Activated naive CD4-positive, alpha-beta T cell treated with anti-CD3 and anti-CD28 coated beads for 36 hours (primary cell): ENCODE measurements at regions of chr19 and their contacts with region 1.

Region 1: DNA sequence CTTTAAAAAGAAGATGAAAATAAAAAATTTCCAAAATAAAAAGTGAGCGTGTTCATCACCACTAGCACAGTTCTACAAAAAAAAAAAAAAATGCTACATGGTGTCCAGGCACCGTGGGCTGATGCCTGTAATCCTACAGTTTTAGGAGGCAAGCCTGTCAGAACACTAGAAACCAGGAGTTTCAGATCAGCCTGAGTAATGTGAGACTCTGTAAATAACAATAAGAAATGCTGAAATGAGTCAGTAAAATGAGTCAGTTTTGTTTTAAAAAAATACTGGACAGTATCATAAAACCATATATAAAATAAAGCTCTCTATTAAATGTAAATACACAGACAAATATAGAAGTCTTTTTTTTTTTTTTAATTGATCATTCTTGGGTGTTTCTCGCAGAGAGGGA is 30.0 kb downstream of the ZNF91 start:
- DNase-seq: no peak
- H3K4me3 Mint-ChIP-seq: no peak overlapping the region
- H3K27ac Mint-ChIP-seq: no peak overlapping the region
- H3K4me1 Mint-ChIP-seq: no peaks in the 10 kb centered on the region
- H3K27me3 Mint-ChIP-seq: no peaks in the 10 kb centered on the region

Region 2: DNA sequence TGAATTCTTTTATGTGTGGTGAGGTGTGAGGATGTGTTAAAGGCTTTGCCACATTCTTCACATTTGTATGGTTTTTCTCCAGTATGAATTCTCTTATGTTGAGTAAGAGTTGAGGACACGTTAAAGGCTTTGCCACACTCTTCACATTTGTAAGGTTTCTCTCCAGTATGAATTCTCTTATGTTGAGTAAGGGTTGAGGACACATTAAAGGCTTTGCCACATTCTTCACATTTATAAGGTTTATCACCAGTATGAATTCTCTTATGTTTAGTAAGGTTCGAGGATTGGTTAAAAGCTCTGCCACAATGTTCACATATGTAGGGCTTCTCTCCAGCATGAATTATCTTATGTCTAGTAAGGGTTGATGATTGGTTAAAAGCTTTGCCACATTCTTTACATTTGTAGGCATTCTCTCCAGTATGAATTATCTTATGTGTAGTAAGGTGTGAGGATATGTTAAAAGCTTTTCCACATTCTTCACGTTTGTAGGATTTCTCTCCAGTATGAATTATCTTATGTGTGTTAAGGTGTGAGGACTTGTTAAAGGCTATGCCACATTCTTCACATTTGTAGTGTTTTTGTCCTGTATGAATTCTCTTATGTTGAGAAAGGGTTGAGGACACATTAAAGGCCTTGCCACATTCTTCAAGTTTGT is 142.1 kb before region 1 on chr19:
- CTCF ChIA-PET with region 1: no interaction called
- intact Hi-C with region 1: loop called (anchors 10 kb)
- DNase-seq: no peak
- H3K4me3 Mint-ChIP-seq: no peak overlapping the region
- H3K27ac Mint-ChIP-seq: peak overlapping the region; percentile 38
- H3K4me1 Mint-ChIP-seq: no peaks in the 10 kb centered on the region
- H3K27me3 Mint-ChIP-seq: no peaks in the 10 kb centered on the region

Region 3: DNA sequence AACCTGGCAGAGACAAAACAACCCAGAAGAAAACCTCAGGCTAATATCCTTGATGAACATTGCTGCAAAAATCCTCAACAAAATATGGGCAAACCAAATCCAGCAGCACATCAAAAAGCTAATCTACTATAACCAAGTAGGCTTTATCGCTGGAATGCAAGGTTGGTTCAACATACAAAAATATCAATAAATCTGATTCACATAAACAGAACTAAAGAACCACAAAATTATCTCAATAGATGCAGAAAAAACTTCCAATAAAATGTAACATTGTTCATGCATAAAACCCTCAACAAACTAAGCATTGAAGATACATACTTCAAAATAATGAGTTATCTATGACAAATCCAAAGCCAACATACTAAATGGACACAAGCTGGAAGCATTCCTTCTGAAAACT is 123.8 kb before region 1 on chr19:
- CTCF ChIA-PET with region 1: no interaction called
- intact Hi-C with region 1: no loop called
- DNase-seq: no peak
- H3K4me3 Mint-ChIP-seq: no peak overlapping the region
- H3K27ac Mint-ChIP-seq: no peak overlapping the region
- H3K4me1 Mint-ChIP-seq: peaks cover 5% of the 10 kb centered on the region
- H3K27me3 Mint-ChIP-seq: no peaks in the 10 kb centered on the region

Region 4: DNA sequence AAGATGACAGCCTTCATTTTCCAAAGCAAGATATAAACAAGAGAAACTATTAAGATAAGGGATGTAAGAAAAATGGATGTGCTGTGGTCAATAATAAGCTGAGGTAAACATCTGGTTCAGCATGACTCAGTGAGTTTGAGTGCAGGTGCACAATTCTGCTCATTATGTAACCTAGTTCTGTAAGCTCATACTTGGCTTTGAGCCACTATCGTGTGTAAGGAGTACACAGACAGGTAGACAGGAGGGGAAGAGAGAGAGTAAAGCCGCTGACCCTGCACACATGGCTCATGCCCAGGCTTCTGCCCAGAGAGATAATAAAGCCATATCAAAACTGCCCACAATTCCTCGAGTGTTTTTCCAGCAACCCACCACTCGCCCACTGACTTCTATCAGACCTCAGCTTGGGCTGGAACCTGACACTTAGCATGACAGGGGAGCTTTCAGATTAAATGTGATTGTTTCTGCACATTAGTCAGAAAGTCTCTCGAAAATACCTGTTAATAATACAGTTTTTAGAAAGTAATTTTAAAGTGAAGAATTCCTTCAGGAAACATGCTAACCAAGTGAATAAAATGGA is 21.7 kb before region 1 on chr19:
- CTCF ChIA-PET with region 1: no interaction called
- intact Hi-C with region 1: no loop called
- DNase-seq: no peak
- H3K4me3 Mint-ChIP-seq: no peak overlapping the region
- H3K27ac Mint-ChIP-seq: no peak overlapping the region
- H3K4me1 Mint-ChIP-seq: no peaks in the 10 kb centered on the region
- H3K27me3 Mint-ChIP-seq: no peaks in the 10 kb centered on the region

Region 5: DNA sequence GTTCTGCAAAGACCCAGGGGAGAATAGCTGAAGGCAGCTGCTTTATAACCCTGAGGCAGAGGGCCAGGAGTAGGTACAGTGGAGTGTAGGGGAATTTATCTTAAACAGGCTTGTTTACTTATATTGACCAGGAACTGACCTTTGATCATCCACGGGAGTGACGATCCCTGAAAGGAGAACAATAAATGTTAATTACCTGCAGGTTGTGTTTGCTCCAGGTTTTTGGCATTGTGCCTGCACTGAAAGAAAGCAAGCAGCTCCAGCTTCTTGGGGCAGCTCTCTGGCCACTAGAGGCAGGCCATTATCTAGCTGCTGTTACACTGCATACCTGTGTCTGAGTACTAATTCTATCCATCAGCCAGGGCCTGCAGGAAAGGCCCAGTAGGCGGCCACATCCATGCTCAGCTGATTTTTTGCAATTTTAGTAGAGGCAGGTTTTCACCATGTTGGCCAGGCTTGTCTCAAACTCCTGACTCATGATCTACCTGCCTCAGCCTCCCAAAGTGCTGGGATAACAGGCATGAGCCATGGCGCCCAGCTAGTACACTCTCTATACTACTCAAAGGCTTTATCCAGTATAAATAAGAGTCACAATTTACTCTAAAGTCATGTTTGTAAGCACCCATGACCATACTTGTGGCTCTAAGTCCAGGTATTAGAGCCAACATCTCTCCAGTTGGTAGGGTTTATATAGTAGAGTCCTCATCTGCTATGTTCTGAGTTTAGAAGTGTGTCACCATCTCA is 38.5 kb after region 1 on chr19:
- CTCF ChIA-PET with region 1: no interaction called
- intact Hi-C with region 1: no loop called
- DNase-seq: no peak
- H3K4me3 Mint-ChIP-seq: no peak overlapping the region
- H3K27ac Mint-ChIP-seq: no peak overlapping the region
- H3K4me1 Mint-ChIP-seq: no peaks in the 10 kb centered on the region
- H3K27me3 Mint-ChIP-seq: no peaks in the 10 kb centered on the region

Region 6: DNA sequence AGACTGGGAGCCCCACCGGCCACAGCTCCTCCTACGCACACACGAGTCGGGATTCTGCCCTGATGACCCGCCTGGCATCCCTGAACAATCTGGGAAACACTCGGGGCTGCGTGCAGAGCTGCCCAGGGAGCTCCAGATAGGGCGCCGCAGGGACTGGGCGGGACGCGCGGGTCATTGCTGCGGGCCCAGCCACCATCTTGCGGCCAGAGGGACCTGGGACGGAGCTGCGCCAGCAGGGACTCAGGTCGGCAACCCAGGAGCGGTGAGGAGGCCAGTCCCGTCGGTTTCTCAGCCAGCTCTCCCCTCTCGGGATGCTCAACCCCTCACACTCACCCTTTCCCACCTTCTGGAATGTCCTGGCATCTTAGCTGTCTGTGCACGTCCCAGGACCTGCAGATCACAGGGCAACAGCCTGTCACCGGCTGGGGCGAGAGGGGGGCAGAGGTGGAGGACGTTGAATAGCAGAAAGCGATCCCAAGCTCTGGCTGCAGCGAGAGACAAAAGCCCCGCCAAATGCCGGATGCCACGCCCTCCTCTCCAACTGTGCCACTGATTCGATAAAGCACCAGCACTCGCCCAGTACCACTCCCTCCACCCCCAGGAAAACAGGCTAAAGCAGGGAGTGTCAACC is 50.5 kb after region 1 on chr19:
- CTCF ChIA-PET with region 1: no interaction called
- intact Hi-C with region 1: no loop called
- DNase-seq: peak; percentile 27
- H3K4me3 Mint-ChIP-seq: peak overlapping the region; percentile 68
- H3K27ac Mint-ChIP-seq: no peak overlapping the region
- H3K4me1 Mint-ChIP-seq: peaks cover 10% of the 10 kb centered on the region
- H3K27me3 Mint-ChIP-seq: peaks cover 25% of the 10 kb centered on the region